CD4-positive, alpha-beta T cell (primary cell): ENCODE measurements at regions of chr1 and their contacts with region 1.

Region 1: DNA sequence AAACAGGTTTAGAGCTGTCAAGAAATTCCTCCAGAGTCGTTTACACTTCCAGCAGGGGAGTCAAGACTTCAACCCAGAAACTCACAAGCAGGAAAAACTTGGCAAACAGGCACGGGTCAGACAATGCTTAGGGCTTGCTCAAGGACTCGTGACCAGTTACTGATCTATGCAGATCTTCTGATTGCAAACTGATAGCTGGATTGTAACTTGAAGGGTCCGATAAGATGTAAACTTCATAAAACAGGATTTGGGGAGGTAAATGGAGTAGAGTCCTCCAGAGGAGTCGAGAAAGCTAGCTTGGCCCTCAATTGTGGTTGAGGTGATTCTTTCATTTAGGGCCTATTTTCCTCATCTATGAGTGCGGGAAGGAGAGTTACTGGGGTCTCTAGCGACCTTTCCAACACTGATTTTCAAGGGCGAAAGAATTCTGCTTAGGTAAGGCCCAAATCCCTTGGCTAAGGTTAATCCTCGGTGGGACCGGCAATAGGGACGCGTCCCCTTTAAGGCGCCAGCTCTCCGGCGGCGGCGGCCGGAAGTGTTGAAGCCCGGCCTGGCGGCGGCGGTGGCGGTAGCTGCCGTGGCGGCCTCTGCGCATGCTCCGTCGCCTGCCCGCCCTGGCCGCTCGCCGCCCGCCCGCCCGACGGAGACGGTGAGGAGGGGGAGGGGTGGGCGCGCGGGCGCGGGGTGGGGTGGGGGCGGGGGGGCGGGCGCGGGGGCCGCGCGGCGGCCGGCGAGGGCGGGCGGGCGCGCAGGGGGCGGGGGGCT is at the start of gene GMEB1:
- DNase-seq: peak; percentile 67 to 93 (median 82)
- ATAC-seq: peak; percentile 60
- H3K4me3 ChIP-seq: peak within 1 kb of the TSS; percentile 99
- H3K4me3 Mint-ChIP-seq: peak within 1 kb of the TSS; percentile 100
- H3K27ac ChIP-seq: peak within 1 kb of the TSS; percentile 96 to 97
- H3K27ac Mint-ChIP-seq: peak within 1 kb of the TSS; percentile 100
- H3K4me1 ChIP-seq: peaks cover 35% of the 10 kb centered on the region
- H3K4me1 Mint-ChIP-seq: peaks cover 24% of the 10 kb centered on the region
- H3K27me3 ChIP-seq: no peaks in the 10 kb centered on the region
- H3K27me3 Mint-ChIP-seq: no peaks in the 10 kb centered on the region
- CTCF ChIP-seq: no peak
- total RNA-seq, gene GMEB1: 9.0 to 11.8 TPM

Region 2: GRCh38 chr1:28526889-28527288 is 141.5 kb before region 1 on chr1:
- CTCF ChIA-PET with region 1: no interaction called
- POLR2A ChIA-PET with region 1: no interaction called
- intact Hi-C with region 1: no loop called
- DNase-seq: no peak
- ATAC-seq: no peak
- H3K4me3 ChIP-seq: no peak overlapping the region
- H3K4me3 Mint-ChIP-seq: no peak overlapping the region
- H3K27ac ChIP-seq: no peak overlapping the region
- H3K27ac Mint-ChIP-seq: no peak overlapping the region
- H3K4me1 ChIP-seq: no peaks in the 10 kb centered on the region
- H3K4me1 Mint-ChIP-seq: peaks cover 4% of the 10 kb centered on the region
- H3K27me3 ChIP-seq: no peaks in the 10 kb centered on the region
- H3K27me3 Mint-ChIP-seq: no peaks in the 10 kb centered on the region
- CTCF ChIP-seq: no peak

Region 3: GRCh38 chr1:28648474-28649198 is 19.7 kb before region 1 on chr1 and contains the start of gene RNU11:
- CTCF ChIA-PET with region 1: interaction called, 19 read pairs
- POLR2A ChIA-PET with region 1: interaction called, 198 read pairs
- intact Hi-C with region 1: loop called (anchors 1 kb)
- DNase-seq: peak; percentile 77 to 97 (median 85)
- ATAC-seq: peak; percentile 67
- H3K4me3 ChIP-seq: peak within 1 kb of the TSS; percentile 50
- H3K4me3 Mint-ChIP-seq: peak within 1 kb of the TSS; percentile 78
- H3K27ac ChIP-seq: peak within 1 kb of the TSS; percentile 88 to 93
- H3K27ac Mint-ChIP-seq: peak within 1 kb of the TSS; percentile 96
- H3K4me1 ChIP-seq: peaks cover 36% of the 10 kb centered on the region
- H3K4me1 Mint-ChIP-seq: peaks cover 32% of the 10 kb centered on the region
- H3K27me3 ChIP-seq: no peaks in the 10 kb centered on the region
- H3K27me3 Mint-ChIP-seq: no peaks in the 10 kb centered on the region
- CTCF ChIP-seq: no peak
- total RNA-seq, gene RNU11: not detected

Region 4: DNA sequence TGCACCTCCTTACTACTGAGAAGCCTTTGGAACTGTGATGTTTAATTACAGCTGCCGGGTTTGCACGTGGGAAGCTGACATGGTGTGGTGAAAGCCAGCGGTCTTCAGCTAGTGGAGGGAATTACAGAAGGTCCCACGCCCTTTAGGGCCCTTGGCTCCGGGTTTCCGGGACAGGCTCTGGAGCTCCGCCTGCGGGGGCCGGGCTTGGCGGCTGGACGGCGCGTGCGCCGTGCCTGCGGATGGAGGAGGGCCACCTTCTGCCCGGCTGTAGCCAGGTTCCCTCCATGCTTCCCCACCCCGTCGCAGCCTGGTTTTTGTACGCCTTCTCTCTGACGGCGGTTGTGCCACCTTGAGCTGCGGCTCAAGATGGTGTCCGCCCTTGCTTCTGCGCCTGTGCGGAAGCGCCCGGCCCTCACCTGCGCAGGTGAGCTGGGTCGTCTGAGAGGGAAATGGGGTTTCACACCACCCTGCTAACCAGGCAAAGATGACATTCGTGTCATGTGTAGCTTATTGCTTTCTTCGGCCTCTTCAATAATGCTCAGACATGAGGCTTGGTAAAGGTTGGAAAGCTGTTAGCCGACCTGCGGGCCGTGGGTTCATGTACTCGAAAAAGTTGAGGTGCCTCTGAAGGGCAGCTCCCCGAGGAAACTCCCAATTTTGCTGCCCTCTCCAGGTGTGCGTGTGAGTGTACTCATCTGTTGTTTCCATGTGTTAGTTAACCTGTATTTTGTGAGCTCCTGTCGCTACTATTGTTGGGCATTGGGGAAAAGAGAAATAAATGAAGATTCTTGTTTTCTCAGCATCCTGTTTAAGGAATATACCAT is 107.0 kb after region 1 on chr1:
- CTCF ChIA-PET with region 1: no interaction called
- POLR2A ChIA-PET with region 1: interaction called, 13 read pairs
- intact Hi-C with region 1: no loop called
- DNase-seq: peak; percentile 39 to 89 (median 66)
- ATAC-seq: peak; percentile 93
- H3K4me3 ChIP-seq: peak overlapping the region; percentile 54
- H3K4me3 Mint-ChIP-seq: peak overlapping the region; percentile 88
- H3K27ac ChIP-seq: peak overlapping the region; percentile 26 to 38
- H3K27ac Mint-ChIP-seq: peak overlapping the region; percentile 90
- H3K4me1 ChIP-seq: peaks cover 14% of the 10 kb centered on the region
- H3K4me1 Mint-ChIP-seq: peaks cover 13% of the 10 kb centered on the region
- H3K27me3 ChIP-seq: no peaks in the 10 kb centered on the region
- H3K27me3 Mint-ChIP-seq: no peaks in the 10 kb centered on the region
- CTCF ChIP-seq: no peak

Region 5: GRCh38 chr1:28792644-28793121 is 124.3 kb after region 1 on chr1:
- CTCF ChIA-PET with region 1: no interaction called
- POLR2A ChIA-PET with region 1: no interaction called
- intact Hi-C with region 1: no loop called
- DNase-seq: no peak
- ATAC-seq: no peak
- H3K4me3 ChIP-seq: no peak overlapping the region
- H3K4me3 Mint-ChIP-seq: no peak overlapping the region
- H3K27ac ChIP-seq: no peak overlapping the region
- H3K27ac Mint-ChIP-seq: no peak overlapping the region
- H3K4me1 ChIP-seq: no peaks in the 10 kb centered on the region
- H3K4me1 Mint-ChIP-seq: peaks cover 7% of the 10 kb centered on the region
- H3K27me3 ChIP-seq: no peaks in the 10 kb centered on the region
- H3K27me3 Mint-ChIP-seq: peaks cover 11% of the 10 kb centered on the region
- CTCF ChIP-seq: no peak